Posterior cingulate gyrus (tissue), 11 donors: ENCODE measurements at regions of chr3 and their contacts with region 1.

Region 1: DNA sequence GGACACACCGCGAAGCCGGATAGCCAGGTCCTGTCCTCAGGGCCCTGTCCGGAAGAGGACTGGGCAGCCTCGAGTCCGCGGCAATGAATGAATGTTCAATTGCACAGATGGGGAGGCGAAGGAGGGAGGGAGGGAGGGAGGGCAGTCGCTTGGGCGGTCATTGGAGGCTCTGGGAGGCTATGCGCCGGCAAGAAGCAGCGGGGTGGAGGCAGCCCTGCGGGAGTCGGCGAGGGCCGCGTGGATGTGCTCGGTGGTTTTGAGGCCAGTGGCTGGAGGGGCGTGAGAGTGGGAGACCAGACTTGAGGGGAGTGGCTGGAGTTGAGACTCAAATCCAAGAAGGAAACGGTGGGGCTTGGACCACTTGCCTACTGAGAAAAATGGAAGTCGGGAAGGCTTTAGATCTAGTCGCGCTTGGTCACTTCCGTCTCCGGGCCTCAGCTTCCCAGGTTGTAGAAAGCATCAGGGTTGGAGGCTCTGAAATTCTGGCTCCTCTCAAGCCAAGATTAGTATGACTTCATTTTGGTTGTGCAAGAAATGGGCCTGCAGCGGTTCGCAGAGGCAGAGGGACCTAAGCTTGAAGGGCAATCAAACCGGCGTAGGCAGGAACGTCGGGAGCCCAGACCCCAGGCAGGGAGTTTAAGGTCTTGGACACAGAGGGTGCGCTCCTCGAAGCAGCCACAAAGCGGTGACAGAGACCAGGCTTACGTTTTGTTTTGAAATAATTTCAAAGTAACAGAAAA is 21.1 kb upstream of the PLXND1 start:
- DNase-seq: peak in 9 of 10 donors; percentile 58 to 97 (median 74)

Region 2: DNA sequence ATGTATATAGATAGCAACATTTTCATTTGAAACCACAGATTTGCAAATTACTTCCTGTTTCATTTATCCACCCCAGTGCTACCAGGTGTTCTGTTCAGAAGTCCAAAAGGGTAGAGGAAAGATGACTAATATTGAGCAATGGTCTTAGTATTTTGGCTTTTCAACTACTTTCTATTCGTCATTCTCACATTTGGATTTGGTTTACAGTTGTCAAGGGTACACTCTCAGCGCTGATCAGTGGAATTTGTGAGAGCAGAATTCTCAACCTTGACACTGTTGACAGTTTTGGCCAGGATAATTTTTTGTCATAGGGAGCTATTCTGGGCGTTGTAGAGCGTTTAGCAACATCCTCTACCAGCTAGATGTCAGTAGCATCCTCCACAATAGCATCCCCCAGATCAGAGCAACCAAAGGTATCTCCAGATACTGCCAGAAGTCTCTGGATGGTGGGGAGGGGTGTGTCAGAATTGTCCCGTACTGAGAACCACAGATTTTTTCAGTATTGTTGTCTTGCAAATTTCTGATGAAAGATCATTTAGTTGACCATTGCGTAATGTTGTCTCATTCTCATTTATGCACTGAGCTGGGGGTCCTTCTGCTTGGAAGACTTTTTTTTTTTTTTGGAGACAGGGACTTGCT is 344.8 kb before region 1 on chr3:
- intact Hi-C with region 1: no loop called
- DNase-seq: no peak

Region 3: DNA sequence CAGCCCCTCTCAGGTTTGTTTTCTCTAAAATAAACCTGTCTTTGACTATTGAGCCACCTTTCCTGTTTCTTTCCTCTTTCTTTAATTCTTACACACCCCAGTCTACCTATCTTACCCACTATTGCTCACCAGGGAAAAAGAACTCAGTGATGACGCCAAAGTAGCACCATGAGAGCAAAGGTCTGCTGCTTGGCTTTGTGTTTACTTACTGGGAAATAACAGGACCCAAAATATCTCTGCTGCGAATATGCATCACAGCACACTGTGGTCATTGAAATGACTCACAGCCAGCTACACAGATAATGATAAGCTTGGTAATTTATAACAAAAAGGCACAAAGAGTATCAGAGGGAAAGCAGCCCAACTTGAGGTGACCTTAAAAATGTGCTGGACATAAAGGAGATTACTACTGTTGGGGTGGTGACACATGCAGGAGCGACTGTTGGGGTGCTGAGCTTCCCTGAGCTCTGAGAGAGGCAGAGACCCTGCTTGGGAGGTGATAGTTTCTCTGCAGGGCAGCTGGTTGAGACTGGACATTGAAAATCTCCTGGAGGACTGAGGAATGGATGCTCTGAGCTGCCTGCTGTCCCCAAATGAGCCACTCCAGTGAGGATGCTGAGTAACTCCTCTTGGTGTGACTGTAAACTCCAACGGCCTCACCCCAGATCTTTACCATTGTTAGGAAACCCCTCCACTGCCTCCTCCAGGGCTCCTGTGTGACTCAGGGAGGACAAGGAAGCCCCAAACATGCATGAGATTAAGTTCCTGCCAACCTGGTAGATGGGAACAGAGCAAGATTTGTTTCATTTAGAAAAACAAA is 213.7 kb before region 1 on chr3:
- intact Hi-C with region 1: no loop called
- DNase-seq: no peak

Region 4: GRCh38 chr3:129490242-129491045 is 137.2 kb before region 1 on chr3:
- intact Hi-C with region 1: loop called (anchors 5 kb)
- DNase-seq: peak; percentile 74 to 98 (median 86)

Region 5: DNA sequence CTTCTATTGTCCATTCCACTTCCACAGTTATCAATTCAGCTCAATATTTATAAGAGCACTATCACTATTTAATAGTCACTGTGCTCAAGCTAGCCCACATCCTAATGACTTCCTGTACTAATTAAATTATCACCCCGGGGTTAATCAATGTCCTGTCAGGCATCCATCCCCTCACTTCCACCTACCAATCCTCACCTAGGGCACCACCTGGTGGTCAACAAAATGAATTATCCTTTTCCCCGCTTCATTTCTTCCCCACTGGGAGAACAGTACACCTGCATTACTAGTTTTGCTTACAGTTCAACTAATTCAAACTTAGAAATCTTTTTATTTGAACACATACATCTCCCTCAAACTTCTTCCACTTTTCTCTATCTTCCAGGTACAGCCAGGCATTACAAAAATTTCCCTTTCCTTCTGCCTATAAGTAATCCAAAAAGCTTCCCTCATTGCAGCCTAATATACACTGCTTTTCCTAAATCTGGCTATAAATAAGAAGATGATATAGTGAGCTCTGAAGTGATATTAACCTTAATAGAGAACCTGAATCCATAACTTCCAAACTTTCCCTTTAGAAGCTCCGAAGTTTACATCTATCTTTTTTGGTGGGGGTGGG is 197.4 kb after region 1 on chr3:
- intact Hi-C with region 1: loop called (anchors 2 kb)
- DNase-seq: peak in 4 of 10 donors; percentile 15 to 59 (median 44)

Region 6: GRCh38 chr3:129893581-129894070 is 266.0 kb after region 1 on chr3 and contains the start of gene TMCC1:
- intact Hi-C with region 1: loop called (anchors 5 kb)
- DNase-seq: peak; percentile 61 to 97 (median 84)

Region 7: GRCh38 chr3:129934234-129935123 is 306.9 kb after region 1 on chr3:
- intact Hi-C with region 1: loop called (anchors 1 kb)
- DNase-seq: peak in 6 of 10 donors; percentile 16 to 78 (median 40)

Region 8: GRCh38 chr3:129975038-129975704 is 347.6 kb after region 1 on chr3:
- intact Hi-C with region 1: no loop called
- DNase-seq: peak in 8 of 10 donors; percentile 15 to 86 (median 22)

Region 9: DNA sequence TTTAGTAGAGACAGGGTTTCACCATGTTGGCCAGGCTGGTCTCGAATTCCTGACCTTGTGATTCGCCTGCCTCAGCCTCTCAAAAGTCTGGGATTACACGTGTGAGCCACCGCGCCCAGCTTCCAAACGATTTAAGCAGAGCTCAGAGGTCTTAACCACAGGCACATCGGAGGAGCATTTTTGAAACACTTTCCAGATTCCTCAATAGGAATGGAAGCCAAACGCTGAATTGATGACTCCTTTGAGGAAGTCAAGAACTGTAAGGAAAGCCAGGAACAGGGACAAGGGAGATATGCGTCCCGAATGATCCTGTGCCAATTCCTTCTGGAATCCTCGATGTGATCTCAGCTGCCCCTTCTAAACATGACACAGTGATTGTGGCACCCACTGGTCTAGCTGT is 386.9 kb after region 1 on chr3:
- intact Hi-C with region 1: loop called (anchors 10 kb)
- DNase-seq: no peak

Region 10: GRCh38 chr3:130093741-130094391 is 466.3 kb after region 1 on chr3:
- intact Hi-C with region 1: loop called (anchors 10 kb)
- DNase-seq: no peak